HEK293T (cell line): ENCODE measurements at regions of chr5 and their contacts with region 1.

Region 1: DNA sequence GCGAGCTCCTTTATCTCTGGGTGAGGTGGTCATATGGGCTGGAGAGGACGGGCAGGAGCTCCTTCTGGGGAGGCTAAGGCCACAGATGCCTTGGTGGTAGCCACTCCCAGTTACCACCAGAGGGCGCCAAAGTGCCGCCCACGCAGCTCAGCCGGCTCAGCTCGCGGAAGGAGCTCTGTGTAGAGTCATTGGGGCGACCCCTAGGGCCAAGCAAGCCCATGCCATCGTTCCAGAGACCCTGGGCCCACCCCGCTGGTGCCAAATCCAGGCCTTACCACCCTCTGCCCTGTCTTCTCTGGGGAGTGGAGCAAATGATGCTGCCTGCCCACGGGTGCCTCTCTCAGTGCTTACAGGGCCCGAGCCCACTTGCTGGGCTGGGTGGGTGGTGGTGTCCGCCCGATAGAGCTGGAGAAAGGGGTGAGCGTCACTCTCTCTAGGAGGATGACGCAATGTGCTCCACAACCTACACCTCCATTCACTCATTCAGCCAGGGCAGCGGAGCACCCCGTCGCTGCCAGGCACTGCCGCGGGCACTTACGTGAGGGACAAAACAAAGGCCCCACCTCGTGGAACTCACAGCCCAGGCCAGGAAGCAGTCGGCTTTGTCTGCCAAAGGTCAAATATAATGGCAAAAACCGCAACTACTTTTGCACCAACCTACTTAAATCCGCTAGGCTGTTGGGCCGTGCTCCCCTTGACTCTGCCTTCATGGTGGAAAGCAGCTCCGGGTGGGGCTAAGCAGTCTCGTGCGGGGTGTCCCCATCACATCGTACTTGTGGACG is 13.8 kb downstream of the TSPAN17 start:
- DNase-seq: peak; percentile 96

Region 2: GRCh38 chr5:176621661-176622079 is 39.4 kb before region 1 on chr5:
- CTCF ChIA-PET with region 1: no interaction called
- POLR2A ChIA-PET with region 1: no interaction called
- DNase-seq: no peak

Region 3: GRCh38 chr5:176647030-176647866 is 13.8 kb before region 1 on chr5 and contains the start of gene TSPAN17:
- CTCF ChIA-PET with region 1: interaction called, 13 read pairs
- POLR2A ChIA-PET with region 1: interaction called, 12 read pairs
- DNase-seq: peak; percentile 100

Region 4: GRCh38 chr5:176677209-176678131 is 16.4 kb after region 1 on chr5:
- CTCF ChIA-PET with region 1: interaction called, 12 read pairs
- POLR2A ChIA-PET with region 1: no interaction called
- DNase-seq: no peak

Region 5: GRCh38 chr5:176693477-176693851 is 32.4 kb after region 1 on chr5:
- CTCF ChIA-PET with region 1: interaction called, 27 read pairs
- POLR2A ChIA-PET with region 1: no interaction called
- DNase-seq: no peak

Region 6: GRCh38 chr5:176899296-176899891 is 238.3 kb after region 1 on chr5 and contains the start of gene HK3:
- CTCF ChIA-PET with region 1: interaction called, 10 read pairs
- POLR2A ChIA-PET with region 1: no interaction called
- DNase-seq: no peak

Region 7: DNA sequence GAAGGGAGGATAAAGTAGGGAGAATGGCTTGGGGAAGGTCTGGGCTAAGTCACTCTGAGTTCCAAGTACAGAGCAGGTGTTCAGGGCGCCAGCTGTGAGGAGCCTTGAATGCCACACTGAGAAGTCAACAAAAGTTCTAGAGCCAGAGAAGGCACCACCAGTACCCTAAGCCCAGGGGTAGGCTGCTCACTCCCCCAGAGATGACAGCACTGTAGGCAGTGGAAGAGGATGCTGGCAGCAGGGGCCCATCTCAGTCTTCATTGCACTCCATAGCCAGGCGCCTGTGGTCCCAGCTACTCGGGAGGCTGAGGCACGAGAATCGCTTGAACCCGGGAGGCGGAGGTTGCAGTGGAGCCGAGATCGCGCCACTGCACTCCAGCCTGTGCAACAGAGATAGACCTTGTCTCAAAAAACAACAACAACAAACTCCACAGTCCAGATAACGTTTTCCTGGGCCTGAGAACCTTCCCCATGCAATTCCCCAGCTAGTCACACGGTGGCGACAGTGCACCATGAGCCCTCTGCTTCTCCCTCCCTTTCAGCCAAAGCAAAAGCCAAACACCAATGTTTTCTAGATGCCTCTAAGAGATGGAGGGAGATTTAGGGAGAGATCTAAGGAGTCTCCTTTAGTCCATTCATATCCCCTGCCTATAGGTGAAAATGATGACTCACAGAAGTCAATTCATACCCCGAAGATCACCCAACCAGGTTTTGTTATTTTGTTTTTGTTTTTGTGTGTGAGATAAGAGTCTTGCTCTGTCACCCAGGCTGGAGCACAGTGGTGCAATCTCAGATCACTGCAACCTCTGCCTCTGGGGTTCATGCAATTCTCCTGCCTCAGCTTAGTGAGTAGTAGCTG is 452.7 kb after region 1 on chr5:
- CTCF ChIA-PET with region 1: interaction called, 15 read pairs
- POLR2A ChIA-PET with region 1: no interaction called
- DNase-seq: peak; percentile 93